B cell (primary cell): ENCODE measurements at regions of chr18 and their contacts with region 1.

Region 1: DNA sequence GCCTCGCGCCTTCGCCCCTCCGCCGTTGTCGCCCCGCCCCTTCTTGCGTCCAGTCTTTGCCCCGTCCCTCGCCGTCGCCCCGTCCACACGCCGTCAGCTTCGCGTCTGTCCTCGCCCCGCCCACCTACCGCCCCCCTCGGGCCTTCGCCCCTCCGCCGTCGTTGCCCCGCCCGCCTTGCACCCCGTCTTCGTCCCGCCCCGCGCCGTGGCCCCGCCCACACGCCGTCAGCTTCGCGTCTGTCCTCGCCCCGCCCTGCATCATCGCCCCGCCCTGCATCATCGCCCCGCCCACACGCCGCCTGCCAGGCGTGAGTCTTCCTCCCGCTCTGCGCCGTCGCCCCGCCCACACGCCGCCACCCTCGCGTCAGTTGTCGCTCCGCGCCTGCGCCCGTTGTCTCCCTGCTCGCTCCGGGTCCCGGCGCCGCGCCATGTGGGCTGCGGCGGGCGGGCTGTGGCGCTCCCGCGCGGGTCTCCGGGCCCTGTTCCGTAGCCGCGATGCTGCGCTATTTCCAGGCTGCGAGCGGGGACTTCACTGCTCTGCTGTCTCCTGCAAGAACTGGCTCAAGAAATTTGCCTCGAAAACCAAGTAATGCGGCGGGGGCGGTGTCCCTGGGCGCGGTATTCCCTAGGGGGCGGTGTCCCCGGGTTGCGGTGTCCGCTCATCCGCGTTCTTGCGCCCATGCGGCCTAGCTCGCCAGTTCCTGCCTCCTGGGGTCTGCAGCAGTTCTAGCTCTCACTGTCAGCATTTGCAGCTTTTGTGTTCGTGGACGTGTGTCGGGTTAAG is at the start of gene RBFA:
- DNase-seq: peak; percentile 99
- ATAC-seq: peak; percentile 72
- H3K4me3 ChIP-seq: peak within 1 kb of the TSS; percentile 62 to 99 (median 85)
- H3K4me3 Mint-ChIP-seq: peak within 1 kb of the TSS; percentile 95
- H3K27ac ChIP-seq: peak within 1 kb of the TSS; percentile 93
- H3K27ac Mint-ChIP-seq: peak within 1 kb of the TSS; percentile 97
- H3K4me1 ChIP-seq: peaks cover 15 to 20% of the 10 kb centered on the region in 2 donors
- H3K4me1 Mint-ChIP-seq: peaks cover 19% of the 10 kb centered on the region
- H3K27me3 ChIP-seq: no peaks in the 10 kb centered on the region
- H3K27me3 Mint-ChIP-seq: no peaks in the 10 kb centered on the region
- CTCF ChIP-seq: no peak
- total RNA-seq, gene RBFA: 24.2 TPM in 2 replicates

Region 2: GRCh38 chr18:79523736-79524180 is 510.5 kb before region 1 on chr18:
- CTCF ChIA-PET with region 1: no interaction called
- POLR2A ChIA-PET with region 1: no interaction called
- intact Hi-C with region 1: loop called (anchors 5 kb)
- DNase-seq: peak; percentile 92
- ATAC-seq: peak; percentile 57
- H3K4me3 ChIP-seq: peak overlapping the region in 4 of 5 experiments; percentile 37 to 46 (median 42)
- H3K4me3 Mint-ChIP-seq: peak overlapping the region; percentile 76
- H3K27ac ChIP-seq: peak overlapping the region; percentile 96
- H3K27ac Mint-ChIP-seq: peak overlapping the region; percentile 85
- H3K4me1 ChIP-seq: peaks cover 54 to 68% of the 10 kb centered on the region in 2 donors
- H3K4me1 Mint-ChIP-seq: peaks cover 67% of the 10 kb centered on the region
- H3K27me3 ChIP-seq: no peaks in the 10 kb centered on the region
- H3K27me3 Mint-ChIP-seq: no peaks in the 10 kb centered on the region
- CTCF ChIP-seq: no peak

Region 3: GRCh38 chr18:79951578-79952455 is 82.4 kb before region 1 on chr18 and contains the start of gene SLC66A2:
- CTCF ChIA-PET with region 1: no interaction called
- POLR2A ChIA-PET with region 1: interaction called, 11 read pairs
- intact Hi-C with region 1: loop called (anchors 1 kb)
- DNase-seq: peak; percentile 92
- ATAC-seq: peak; percentile 83
- H3K4me3 ChIP-seq: peak within 1 kb of the TSS; percentile 58 to 73 (median 70)
- H3K4me3 Mint-ChIP-seq: peak within 1 kb of the TSS; percentile 92
- H3K27ac ChIP-seq: peak within 1 kb of the TSS; percentile 54 to 83
- H3K27ac Mint-ChIP-seq: peak within 1 kb of the TSS; percentile 84
- H3K4me1 ChIP-seq: peaks cover 17 to 37% of the 10 kb centered on the region in 2 donors
- H3K4me1 Mint-ChIP-seq: peaks cover 34% of the 10 kb centered on the region
- H3K27me3 ChIP-seq: no peaks in the 10 kb centered on the region
- H3K27me3 Mint-ChIP-seq: no peaks in the 10 kb centered on the region
- CTCF ChIP-seq: no peak
- total RNA-seq, gene SLC66A2: 44.4 and 45.6 TPM in 2 replicates

Region 4: DNA sequence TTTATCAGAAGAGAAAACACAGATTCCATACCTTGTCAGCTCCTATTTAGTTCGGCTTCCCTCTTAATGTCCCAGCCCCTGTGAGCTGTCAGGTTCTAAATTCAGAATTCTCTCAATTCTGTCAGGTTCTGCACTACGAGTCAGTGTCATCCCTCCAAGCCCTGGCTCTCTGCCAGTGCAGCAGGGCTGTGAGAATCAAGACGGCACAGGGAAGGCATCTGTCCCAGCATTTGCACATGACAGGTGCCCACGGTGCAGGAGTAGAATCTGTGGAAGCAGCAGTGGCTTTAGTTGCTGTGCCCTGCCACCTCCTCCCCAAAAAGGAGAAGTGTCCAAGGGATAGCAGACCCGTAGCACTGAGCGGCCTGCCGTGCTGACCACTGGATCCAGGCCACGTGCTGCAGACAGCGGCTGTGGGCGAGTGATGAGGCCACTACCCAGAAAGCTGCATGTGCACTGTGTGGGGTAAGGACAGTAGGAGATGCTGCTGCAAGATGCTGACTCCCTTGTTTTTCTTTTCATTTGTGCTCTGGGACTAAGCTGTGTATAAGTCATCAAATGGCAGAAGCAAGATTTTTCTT is 12.8 kb after region 1 on chr18:
- CTCF ChIA-PET with region 1: no interaction called
- POLR2A ChIA-PET with region 1: no interaction called
- intact Hi-C with region 1: no loop called
- DNase-seq: no peak
- ATAC-seq: no peak
- H3K4me3 ChIP-seq: no peak overlapping the region
- H3K4me3 Mint-ChIP-seq: no peak overlapping the region
- H3K27ac ChIP-seq: no peak overlapping the region
- H3K27ac Mint-ChIP-seq: no peak overlapping the region
- H3K4me1 ChIP-seq: no peaks in the 10 kb centered on the region
- H3K4me1 Mint-ChIP-seq: no peaks in the 10 kb centered on the region
- H3K27me3 ChIP-seq: no peaks in the 10 kb centered on the region
- H3K27me3 Mint-ChIP-seq: no peaks in the 10 kb centered on the region
- CTCF ChIP-seq: no peak

Region 5: DNA sequence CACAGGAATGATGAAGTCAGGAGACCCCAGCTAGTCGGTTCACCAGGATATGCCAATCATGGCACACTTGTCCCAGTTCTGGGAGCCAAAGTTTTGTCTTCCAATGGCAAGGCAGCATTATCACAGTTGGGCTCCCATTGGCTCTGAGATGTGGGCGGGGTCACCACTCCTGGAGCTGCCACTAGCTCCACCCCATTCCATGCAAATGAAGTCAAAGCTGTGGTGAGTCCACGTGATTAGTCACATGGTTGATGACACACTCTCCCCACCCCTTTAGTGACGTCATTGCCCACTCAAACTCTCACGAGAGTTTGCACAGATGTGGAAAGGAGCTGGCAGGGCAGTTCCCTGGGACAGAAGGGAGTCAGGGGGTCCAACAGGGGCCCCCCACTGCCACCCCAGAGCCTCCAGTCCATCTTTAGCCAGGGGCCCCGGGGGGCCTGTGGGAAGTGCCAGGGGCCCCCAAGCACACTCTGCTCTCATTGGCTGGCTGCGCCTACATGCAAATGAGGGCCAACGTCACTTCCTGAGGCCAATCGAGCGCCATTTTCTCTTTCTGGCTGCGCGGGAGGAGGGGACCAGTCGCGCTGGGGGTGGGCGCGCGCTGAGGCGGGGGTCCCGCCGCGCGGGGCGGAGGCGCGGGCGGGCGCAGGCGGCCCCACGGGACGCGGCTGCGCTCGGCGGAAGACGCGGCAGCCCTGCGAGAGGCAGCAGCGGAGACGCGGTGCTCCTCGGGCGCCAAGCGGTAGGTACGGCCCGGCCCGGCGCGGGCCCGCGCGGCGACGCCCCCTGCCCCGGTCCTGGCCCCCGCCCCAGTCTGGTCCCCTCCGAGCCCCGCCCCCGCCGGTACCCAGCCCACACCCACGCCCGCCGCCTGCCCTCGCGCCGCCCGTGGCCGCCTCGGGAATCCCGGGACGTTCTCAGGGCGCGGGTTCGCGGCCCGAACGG is 74.7 kb after region 1 on chr18 and contains the start of gene ADNP2:
- CTCF ChIA-PET with region 1: no interaction called
- POLR2A ChIA-PET with region 1: interaction called, 10 read pairs
- intact Hi-C with region 1: loop called (anchors 1 kb)
- DNase-seq: peak; percentile 95
- ATAC-seq: peak; percentile 66
- H3K4me3 ChIP-seq: peak within 1 kb of the TSS; percentile 27 to 78 (median 62)
- H3K4me3 Mint-ChIP-seq: peak within 1 kb of the TSS; percentile 84
- H3K27ac ChIP-seq: peak within 1 kb of the TSS; percentile 84 to 85
- H3K27ac Mint-ChIP-seq: peak within 1 kb of the TSS; percentile 90
- H3K4me1 ChIP-seq: peaks cover 28 to 41% of the 10 kb centered on the region in 2 donors
- H3K4me1 Mint-ChIP-seq: peaks cover 48% of the 10 kb centered on the region
- H3K27me3 ChIP-seq: no peaks in the 10 kb centered on the region
- H3K27me3 Mint-ChIP-seq: no peaks in the 10 kb centered on the region
- CTCF ChIP-seq: no peak
- total RNA-seq, gene ADNP2: 14.7 and 16.1 TPM in 2 replicates

Region 6: GRCh38 chr18:80210312-80211083 is 176.2 kb after region 1 on chr18:
- CTCF ChIA-PET with region 1: no interaction called
- POLR2A ChIA-PET with region 1: no interaction called
- intact Hi-C with region 1: no loop called
- DNase-seq: no peak
- ATAC-seq: no peak
- H3K4me3 ChIP-seq: no peak overlapping the region
- H3K4me3 Mint-ChIP-seq: no peak overlapping the region
- H3K27ac ChIP-seq: no peak overlapping the region
- H3K27ac Mint-ChIP-seq: no peak overlapping the region
- H3K4me1 ChIP-seq: no peaks in the 10 kb centered on the region
- H3K4me1 Mint-ChIP-seq: no peaks in the 10 kb centered on the region
- H3K27me3 ChIP-seq: peaks cover 0 to 8% (median 2%) of the 10 kb centered on the region in 4 experiments
- H3K27me3 Mint-ChIP-seq: peaks cover 27% of the 10 kb centered on the region
- CTCF ChIP-seq: no peak